ENCODE measurements at regions of chr10 and their contacts with region 1.

Region 1: DNA sequence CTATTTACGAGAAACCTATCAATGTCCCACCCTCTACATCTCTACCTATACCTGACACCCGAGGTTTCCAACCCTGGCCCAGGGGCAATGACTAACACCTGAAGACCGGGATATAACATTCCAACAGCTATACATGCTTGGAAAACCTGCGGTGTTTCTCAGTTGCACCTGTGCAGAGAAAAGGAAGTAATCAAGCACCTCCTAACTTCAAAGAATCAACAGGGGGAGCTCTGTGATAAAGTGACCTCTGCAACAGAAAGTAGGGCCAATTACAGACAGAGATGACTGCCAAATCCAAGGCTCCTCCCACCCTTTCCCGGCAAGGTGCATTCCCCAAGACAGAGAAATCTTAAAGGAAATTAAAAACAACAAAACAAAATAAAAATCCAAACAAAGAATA is 41.3 kb downstream of the CCDC6 start:
- DNase-seq: peak; percentile 69
- H3K4me3 ChIP-seq: no peak overlapping the region
- H3K27ac ChIP-seq: peak overlapping the region; percentile 48 to 74 (median 57)
- H3K4me1 ChIP-seq: peaks cover 21 to 59% (median 37%) of the 10 kb centered on the region in 4 donors
- H3K27me3 ChIP-seq: no peaks in the 10 kb centered on the region
- CTCF ChIP-seq: peak; percentile 28 to 60 (median 41)
- EP300 ChIP-seq: no peak
- POLR2A ChIP-seq: no peak

Region 2: DNA sequence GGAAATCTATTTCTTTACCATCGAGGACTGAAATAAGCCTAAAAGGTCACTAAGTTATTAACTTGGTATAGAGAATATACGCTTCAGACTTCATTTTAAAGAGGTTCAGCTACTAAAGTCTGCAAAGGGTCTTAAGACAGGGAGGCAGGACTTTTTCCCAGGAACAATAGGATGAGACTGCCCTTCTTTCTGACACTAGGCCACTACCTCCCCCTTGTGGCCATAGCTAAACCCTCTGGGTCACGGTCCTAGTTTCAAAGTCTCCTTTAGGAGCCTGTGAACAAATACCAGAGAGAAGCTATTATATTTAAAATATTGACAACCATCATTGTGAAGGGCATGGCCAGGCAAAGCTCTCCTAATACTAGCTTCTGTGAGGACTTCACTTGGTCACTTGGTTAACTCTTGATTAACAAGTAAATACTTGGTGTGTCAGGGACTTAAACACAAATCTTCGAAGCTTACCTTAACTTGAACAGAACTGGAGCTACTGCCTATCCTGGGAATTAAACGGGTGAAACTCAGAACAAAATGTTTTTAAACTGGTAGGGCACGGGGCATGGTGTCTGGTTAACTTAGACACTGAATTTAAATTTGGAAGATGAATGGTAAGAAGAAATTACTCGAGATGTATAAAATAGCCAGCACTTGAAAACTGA is 34.4 kb before region 1 on chr10:
- in situ Hi-C with region 1: no loop called
- intact Hi-C with region 1: loop called (anchors 2 kb)
- DNase-seq: peak; percentile 46
- H3K4me3 ChIP-seq: no peak overlapping the region
- H3K27ac ChIP-seq: no peak overlapping the region
- H3K4me1 ChIP-seq: peaks cover 4 to 23% (median 14%) of the 10 kb centered on the region in 4 donors
- H3K27me3 ChIP-seq: no peaks in the 10 kb centered on the region
- CTCF ChIP-seq: peak; percentile 46 to 79 (median 75)
- EP300 ChIP-seq: no peak
- POLR2A ChIP-seq: no peak

Region 3: GRCh38 chr10:59905066-59905740 is 40.1 kb after region 1 on chr10:
- in situ Hi-C with region 1: no loop called
- intact Hi-C with region 1: loop called (anchors 2 kb)
- DNase-seq: peak; percentile 59
- H3K4me3 ChIP-seq: peak overlapping the region; percentile 84 to 99 (median 92)
- H3K27ac ChIP-seq: peak overlapping the region; percentile 95 to 97 (median 96)
- H3K4me1 ChIP-seq: peaks cover 23 to 65% (median 50%) of the 10 kb centered on the region in 4 donors
- H3K27me3 ChIP-seq: no peaks in the 10 kb centered on the region
- CTCF ChIP-seq: peak in 1 of 5 experiments; percentile 10
- EP300 ChIP-seq: no peak
- POLR2A ChIP-seq: peak; percentile 61

Region 4: DNA sequence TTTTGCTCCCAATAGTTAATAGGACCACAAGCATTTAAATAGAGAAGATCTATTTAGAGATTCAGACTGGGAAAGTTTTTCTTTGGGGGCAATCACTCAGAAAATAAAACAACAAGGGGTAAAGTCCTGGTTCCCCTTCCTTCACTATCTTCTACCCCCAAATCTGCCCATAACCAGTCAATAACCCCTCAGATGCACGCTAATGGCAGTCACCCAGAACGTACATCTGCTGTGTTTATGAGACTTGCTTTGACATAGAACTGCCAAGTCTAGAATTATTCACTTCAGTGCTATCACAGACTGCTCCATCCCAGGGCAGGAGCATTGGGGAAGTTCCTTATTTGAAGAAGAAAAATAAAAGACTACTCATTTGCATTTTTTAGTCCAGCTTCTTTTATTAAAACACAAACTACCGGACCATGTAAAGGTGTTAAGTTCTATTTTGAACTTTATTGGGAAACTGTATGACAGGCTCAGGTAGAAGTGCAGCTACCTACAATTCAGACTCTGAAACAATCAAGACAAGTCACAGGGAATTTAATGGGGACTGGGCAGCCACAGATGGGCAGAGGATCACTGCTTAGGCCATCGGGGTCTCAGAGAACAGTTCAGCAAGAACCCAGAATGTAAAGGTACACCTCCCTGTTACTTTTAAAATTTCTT is 486.2 kb after region 1 on chr10:
- in situ Hi-C with region 1: no loop called
- intact Hi-C with region 1: no loop called
- DNase-seq: no peak
- H3K4me3 ChIP-seq: no peak overlapping the region
- H3K27ac ChIP-seq: no peak overlapping the region
- H3K4me1 ChIP-seq: peaks cover 0 to 13% (median 3%) of the 10 kb centered on the region in 4 donors
- H3K27me3 ChIP-seq: no peaks in the 10 kb centered on the region
- CTCF ChIP-seq: no peak
- EP300 ChIP-seq: no peak
- POLR2A ChIP-seq: no peak

Region 5: DNA sequence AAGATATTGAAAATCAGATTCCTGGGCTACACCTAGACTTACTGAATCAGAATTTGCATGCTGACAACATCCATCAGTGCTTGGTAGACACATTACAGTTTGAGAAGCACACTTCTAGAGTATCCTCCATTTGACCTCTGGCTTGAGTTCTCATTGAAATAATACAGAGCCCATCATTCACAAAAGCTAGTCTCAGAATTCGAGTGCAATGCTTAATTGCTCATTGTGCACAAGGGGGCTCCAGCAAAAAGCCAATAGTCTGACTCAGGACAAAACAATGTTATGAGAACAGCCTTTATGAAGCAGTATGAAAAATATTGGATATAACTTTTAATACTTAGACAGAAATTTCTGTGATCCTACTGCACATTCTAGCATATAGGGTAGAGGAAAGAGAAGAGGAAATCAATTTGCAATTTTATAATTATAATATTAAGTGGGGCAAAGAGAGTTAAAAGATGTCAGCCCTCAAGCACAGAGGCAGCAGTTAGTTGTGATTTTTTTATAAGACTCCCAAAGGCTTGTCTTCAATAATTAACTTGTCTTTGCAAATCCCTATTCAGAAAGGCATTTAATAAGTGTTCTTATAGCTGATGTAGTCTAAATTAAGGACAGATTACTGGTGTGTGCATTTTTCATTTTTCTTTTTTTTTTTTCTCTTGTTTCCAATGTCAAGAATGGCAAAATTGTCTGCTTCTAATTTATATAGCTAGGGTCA is 630.4 kb after region 1 on chr10:
- in situ Hi-C with region 1: no loop called
- intact Hi-C with region 1: no loop called
- DNase-seq: no peak
- H3K4me3 ChIP-seq: no peak overlapping the region
- H3K27ac ChIP-seq: no peak overlapping the region
- H3K4me1 ChIP-seq: peaks cover 0 to 14% (median 3%) of the 10 kb centered on the region in 4 donors
- H3K27me3 ChIP-seq: no peaks in the 10 kb centered on the region
- CTCF ChIP-seq: no peak
- EP300 ChIP-seq: no peak
- POLR2A ChIP-seq: no peak